Activated naive CD4-positive, alpha-beta T cell treated with anti-CD3 and anti-CD28 coated beads for 36 hours (primary cell): ENCODE measurements at regions of chr17 and their contacts with region 1.

Region 1: GRCh38 chr17:35242805-35243560 is at the start of gene SLFN5:
- DNase-seq: peak; percentile 95
- H3K4me3 Mint-ChIP-seq: peak within 1 kb of the TSS; percentile 87
- H3K27ac Mint-ChIP-seq: peak within 1 kb of the TSS; percentile 97
- H3K4me1 Mint-ChIP-seq: peaks cover 65% of the 10 kb centered on the region
- H3K27me3 Mint-ChIP-seq: no peaks in the 10 kb centered on the region
- total RNA-seq, gene SLFN5: 34.1 to 35.0 TPM

Region 2: GRCh38 chr17:35046740-35047283 is 196.2 kb before region 1 on chr17:
- CTCF ChIA-PET with region 1: no interaction called
- intact Hi-C with region 1: loop called (anchors 2 kb)
- DNase-seq: peak; percentile 84
- H3K4me3 Mint-ChIP-seq: peak overlapping the region; percentile 77
- H3K27ac Mint-ChIP-seq: peak overlapping the region; percentile 94
- H3K4me1 Mint-ChIP-seq: peaks cover 73% of the 10 kb centered on the region
- H3K27me3 Mint-ChIP-seq: no peaks in the 10 kb centered on the region

Region 3: GRCh38 chr17:35161281-35161761 is 81.7 kb before region 1 on chr17:
- CTCF ChIA-PET with region 1: interaction called, 3 read pairs
- intact Hi-C with region 1: loop called (anchors 1 kb)
- DNase-seq: peak; percentile 35
- H3K4me3 Mint-ChIP-seq: peak overlapping the region; percentile 47
- H3K27ac Mint-ChIP-seq: peak overlapping the region; percentile 73
- H3K4me1 Mint-ChIP-seq: peaks cover 50% of the 10 kb centered on the region
- H3K27me3 Mint-ChIP-seq: no peaks in the 10 kb centered on the region

Region 4: GRCh38 chr17:35286120-35286781 is 43.3 kb after region 1 on chr17:
- CTCF ChIA-PET with region 1: no interaction called
- intact Hi-C with region 1: loop called (anchors 1 kb)
- DNase-seq: peak; percentile 51
- H3K4me3 Mint-ChIP-seq: no peak overlapping the region
- H3K27ac Mint-ChIP-seq: peak overlapping the region; percentile 62
- H3K4me1 Mint-ChIP-seq: peaks cover 45% of the 10 kb centered on the region
- H3K27me3 Mint-ChIP-seq: no peaks in the 10 kb centered on the region

Region 5: DNA sequence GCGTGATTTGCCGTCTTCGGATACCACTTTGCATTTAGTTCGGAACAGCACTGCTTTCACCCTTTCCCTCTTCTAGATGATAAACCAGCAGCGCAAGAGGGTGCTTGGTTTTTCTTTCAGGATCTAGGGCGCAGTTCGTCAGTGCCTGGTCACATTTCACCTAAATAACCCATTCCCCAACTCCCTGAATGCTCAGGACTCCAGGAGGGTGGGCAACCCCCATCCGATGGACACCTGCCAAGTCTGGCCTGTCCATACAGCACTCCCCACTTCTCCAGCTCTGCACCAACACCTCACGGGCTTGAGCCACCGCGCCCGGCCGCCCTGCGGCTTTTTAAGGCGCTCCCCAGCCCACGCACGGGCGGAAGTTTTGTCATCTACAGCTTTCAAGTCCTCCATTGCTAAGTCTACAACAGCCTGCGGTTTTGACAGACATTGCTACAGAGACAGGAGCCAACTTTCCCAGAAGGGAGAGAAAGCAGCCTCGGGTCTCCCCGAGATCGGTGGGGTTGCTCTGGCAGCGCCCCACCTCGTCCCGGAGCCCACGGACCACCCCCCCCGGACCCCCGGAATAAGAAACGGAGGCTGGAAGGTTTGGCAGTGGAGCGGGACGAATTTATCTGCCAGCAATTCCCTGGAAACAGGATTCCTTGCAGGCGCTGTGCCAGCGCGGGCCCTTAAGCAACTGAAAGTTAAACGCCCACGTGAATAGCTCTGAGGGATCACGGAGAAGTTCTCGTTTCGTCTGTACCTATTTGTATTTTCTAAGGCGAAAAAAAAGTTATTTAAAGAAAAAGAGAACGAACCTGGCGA is 244.1 kb after region 1 on chr17:
- CTCF ChIA-PET with region 1: no interaction called
- intact Hi-C with region 1: loop called (anchors 2 kb)
- DNase-seq: peak; percentile 90
- H3K4me3 Mint-ChIP-seq: peak overlapping the region; percentile 82
- H3K27ac Mint-ChIP-seq: peak overlapping the region; percentile 83
- H3K4me1 Mint-ChIP-seq: peaks cover 27% of the 10 kb centered on the region
- H3K27me3 Mint-ChIP-seq: no peaks in the 10 kb centered on the region

Region 6: DNA sequence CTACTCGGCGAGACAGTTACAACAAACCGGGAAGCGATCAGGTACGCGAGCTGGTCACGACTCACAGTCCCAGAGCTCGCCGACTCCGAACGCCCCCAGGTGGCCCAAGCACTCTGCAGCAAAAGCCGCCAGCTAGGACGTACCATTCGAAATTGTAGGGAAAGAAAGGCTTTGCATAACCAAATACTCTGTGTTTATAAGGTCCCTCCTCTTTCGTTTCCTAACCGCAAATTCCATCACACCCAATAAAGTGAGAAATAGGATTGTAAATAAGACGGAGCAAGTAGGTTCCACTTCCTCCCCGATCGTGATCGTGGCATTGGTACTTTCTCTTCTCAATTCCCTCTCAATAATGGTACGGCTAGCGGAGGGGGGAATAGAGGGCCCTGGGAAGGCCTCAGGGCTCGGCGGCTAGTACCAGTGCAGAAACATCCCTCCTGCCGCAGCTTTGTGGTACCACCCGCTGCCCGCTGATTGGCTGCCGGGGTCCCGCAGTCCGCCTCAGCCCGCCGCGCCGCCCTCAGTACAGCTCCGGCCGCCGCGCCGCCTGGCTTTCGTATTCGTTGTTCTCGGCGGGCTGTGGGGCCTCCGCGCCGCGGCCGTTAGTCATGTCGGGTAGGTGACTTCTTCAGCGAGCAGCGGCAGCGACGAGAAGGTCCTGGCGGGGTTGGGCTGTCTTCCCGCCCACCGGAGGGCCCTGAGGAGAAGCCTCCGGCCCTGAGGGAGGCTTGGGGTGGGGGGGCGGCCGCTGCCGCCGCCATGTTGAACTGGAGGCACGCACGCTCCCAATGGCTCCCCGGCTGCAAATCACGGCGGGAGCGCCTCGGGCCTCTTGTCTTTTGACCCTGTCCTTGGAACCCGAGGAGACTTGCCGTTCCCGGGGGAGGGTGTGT is 566.2 kb after region 1 on chr17 and contains the start of gene TAF15:
- CTCF ChIA-PET with region 1: no interaction called
- intact Hi-C with region 1: loop called (anchors 2 kb)
- DNase-seq: peak; percentile 98
- H3K4me3 Mint-ChIP-seq: peak within 1 kb of the TSS; percentile 83
- H3K27ac Mint-ChIP-seq: peak within 1 kb of the TSS; percentile 99
- H3K4me1 Mint-ChIP-seq: peaks cover 55% of the 10 kb centered on the region
- H3K27me3 Mint-ChIP-seq: no peaks in the 10 kb centered on the region
- total RNA-seq, gene TAF15: 252 to 256 TPM